Naive thymus-derived CD8-positive, alpha-beta T cell (primary cell): ENCODE measurements at regions of chr1 and their contacts with region 1.

Region 1: GRCh38 chr1:40315239-40315794 is 1.8 kb downstream of the COL9A2 start:
- DNase-seq: peak; percentile 79 to 91 (median 85)
- ATAC-seq: peak; percentile 60 to 76
- H3K4me3 Mint-ChIP-seq: peak overlapping the region; percentile 82 to 94 (median 91)
- H3K27ac Mint-ChIP-seq: peak overlapping the region in 9 of 10 donors; percentile 32 to 93 (median 91)
- H3K4me1 Mint-ChIP-seq: peaks cover 19 to 50% (median 40%) of the 10 kb centered on the region in 4 donors
- H3K27me3 Mint-ChIP-seq: peaks cover 0 to 11% (median 6%) of the 10 kb centered on the region in 5 donors

Region 2: GRCh38 chr1:40257688-40258444 is 57.5 kb before region 1 on chr1 and contains the start of gene ZMPSTE24:
- POLR2A ChIA-PET with region 1: interaction called, 13 read pairs
- DNase-seq: peak; percentile 85 to 99 (median 96)
- ATAC-seq: peak; percentile 95 to 97
- H3K4me3 Mint-ChIP-seq: peak within 1 kb of the TSS; percentile 95 to 99 (median 98)
- H3K27ac Mint-ChIP-seq: peak within 1 kb of the TSS; percentile 97 to 100 (median 100)
- H3K4me1 Mint-ChIP-seq: peaks cover 23 to 68% (median 49%) of the 10 kb centered on the region in 4 donors
- H3K27me3 Mint-ChIP-seq: no peaks in the 10 kb centered on the region
- polyA plus RNA-seq, gene ZMPSTE24: 20.8 to 23.6 (median 23.0) TPM

Region 3: GRCh38 chr1:40338745-40339424 is 23.6 kb after region 1 on chr1:
- POLR2A ChIA-PET with region 1: interaction called, 15 read pairs
- DNase-seq: peak; percentile 78 to 94 (median 89)
- ATAC-seq: peak; percentile 93 to 96
- H3K4me3 Mint-ChIP-seq: peak overlapping the region; percentile 26 to 76 (median 52)
- H3K27ac Mint-ChIP-seq: peak overlapping the region; percentile 22 to 90 (median 70)
- H3K4me1 Mint-ChIP-seq: peaks cover 28 to 49% (median 44%) of the 10 kb centered on the region in 4 donors
- H3K27me3 Mint-ChIP-seq: no peaks in the 10 kb centered on the region